H1 (cell line): ENCODE measurements at regions of chr1 and their contacts with region 1.

Region 1: GRCh38 chr1:224774378-224774777 is 155.1 kb upstream of the DNAH14 start:
- DNase-seq: no peak
- H3K4me3 ChIP-seq: no peak overlapping the region
- H3K27ac ChIP-seq: no peak overlapping the region
- H3K4me1 ChIP-seq: peaks cover 0 to 6% (median 3%) of the 10 kb centered on the region in 4 experiments; a peak in 3 of 7 replicates
- H3K27me3 ChIP-seq: no peaks in the 10 kb centered on the region; a peak in 1 of 7 replicates
- CTCF ChIP-seq: peak; percentile 63 to 78 (median 73)
- EP300 ChIP-seq: no peak
- POLR2A ChIP-seq: no peak
- RAD21 ChIP-seq: peak; percentile 54 to 71

Region 2: GRCh38 chr1:224707843-224708725 is 66.3 kb before region 1 on chr1:
- CTCF ChIA-PET with region 1: no interaction called
- POLR2A ChIA-PET with region 1: no interaction called
- DNase-seq: no peak
- H3K4me3 ChIP-seq: no peak overlapping the region
- H3K27ac ChIP-seq: no peak overlapping the region
- H3K4me1 ChIP-seq: peaks cover 0 to 8% (median 5%) of the 10 kb centered on the region in 4 experiments; a peak in 6 of 7 replicates
- H3K27me3 ChIP-seq: no peaks in the 10 kb centered on the region
- CTCF ChIP-seq: no peak
- EP300 ChIP-seq: no peak
- POLR2A ChIP-seq: no peak
- RAD21 ChIP-seq: no peak

Region 3: DNA sequence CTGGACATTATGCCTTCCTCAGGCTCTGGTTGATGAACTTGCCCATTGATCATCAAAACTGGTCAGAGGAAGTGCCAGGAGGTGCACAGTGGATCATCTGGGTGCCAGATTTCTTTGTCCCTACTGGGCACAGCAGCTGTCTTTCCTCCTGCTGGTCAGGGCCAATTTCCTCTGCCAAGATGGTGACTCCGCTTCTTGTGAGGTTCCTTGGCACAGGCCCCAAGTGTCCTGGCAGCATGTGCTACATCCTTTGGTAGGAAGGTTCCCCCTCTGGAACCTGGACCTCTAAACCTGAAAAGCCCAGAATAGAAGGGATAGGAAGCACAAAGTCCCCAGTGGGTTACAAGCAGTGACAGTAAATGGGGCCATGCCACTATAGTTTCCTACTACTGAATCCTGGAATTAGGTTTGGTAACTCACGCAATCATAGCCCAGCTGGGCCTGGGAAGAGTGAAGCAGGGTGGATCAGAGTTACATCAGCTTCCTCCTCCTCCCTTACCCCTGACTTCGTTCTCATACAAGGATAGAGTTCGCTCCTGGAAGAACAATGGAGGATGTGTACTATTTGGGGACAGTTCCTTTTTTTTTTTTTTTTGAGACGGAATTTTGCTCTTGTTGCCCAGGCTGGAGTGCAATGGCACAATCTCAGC is 11.1 kb before region 1 on chr1:
- CTCF ChIA-PET with region 1: interaction called, 11 read pairs
- POLR2A ChIA-PET with region 1: no interaction called
- DNase-seq: no peak
- H3K4me3 ChIP-seq: no peak overlapping the region
- H3K27ac ChIP-seq: no peak overlapping the region
- H3K4me1 ChIP-seq: peaks cover 0 to 8% (median 2%) of the 10 kb centered on the region in 4 experiments; a peak in 3 of 7 replicates
- H3K27me3 ChIP-seq: no peaks in the 10 kb centered on the region; a peak in 1 of 7 replicates
- CTCF ChIP-seq: no peak
- EP300 ChIP-seq: no peak
- POLR2A ChIP-seq: no peak
- RAD21 ChIP-seq: no peak

Region 4: GRCh38 chr1:224811564-224811963 is 37.2 kb after region 1 on chr1:
- CTCF ChIA-PET with region 1: no interaction called
- POLR2A ChIA-PET with region 1: no interaction called
- DNase-seq: no peak
- H3K4me3 ChIP-seq: no peak overlapping the region
- H3K27ac ChIP-seq: no peak overlapping the region; the same call in 1 of the 2 replicates
- H3K4me1 ChIP-seq: no peaks in the 10 kb centered on the region
- H3K27me3 ChIP-seq: no peaks in the 10 kb centered on the region
- CTCF ChIP-seq: no peak
- EP300 ChIP-seq: no peak
- POLR2A ChIP-seq: no peak
- RAD21 ChIP-seq: no peak